ENCODE measurements at regions of chr3 and their contacts with region 1.

Region 1: DNA sequence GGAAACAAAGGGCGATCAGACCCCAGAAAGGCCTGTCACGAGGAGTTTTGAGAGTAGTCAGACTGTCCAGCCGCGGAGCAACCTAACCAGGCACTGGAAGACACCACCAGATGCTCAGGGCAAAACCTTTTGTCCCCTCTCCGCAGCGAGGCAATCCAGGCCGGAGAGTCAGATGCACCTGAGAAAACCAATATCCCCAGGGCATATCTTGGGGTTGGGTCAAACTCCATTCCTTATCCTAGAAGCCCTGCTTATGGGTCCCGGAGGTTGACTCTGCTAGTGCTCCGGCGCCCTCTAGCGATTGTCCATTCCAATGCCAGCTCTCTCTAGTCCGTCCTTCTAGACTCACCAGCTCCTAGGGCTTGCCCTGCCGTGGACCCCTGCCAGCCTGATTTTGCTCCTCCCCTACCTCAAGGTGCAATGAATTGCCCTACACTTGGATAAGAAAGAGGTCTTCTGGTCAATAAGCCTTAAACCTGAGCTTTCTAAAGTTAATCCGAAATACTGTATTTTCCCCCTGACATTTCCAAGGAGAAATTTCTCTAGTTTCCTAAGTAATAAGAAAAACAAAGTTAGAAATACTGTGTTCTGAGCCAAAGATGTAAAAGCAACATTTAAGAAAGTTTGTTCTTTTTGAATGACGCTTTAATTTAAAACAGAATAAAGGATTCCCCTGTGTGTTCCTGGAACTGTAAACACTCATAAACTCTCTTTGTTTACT is 5.5 kb downstream of the CPNE4 start:
- DNase-seq: peak; percentile 81
- H3K4me3 ChIP-seq: no peak overlapping the region; a peak in 1 of 4 replicates
- H3K27ac ChIP-seq: no peak overlapping the region
- H3K4me1 ChIP-seq: peaks cover 0 to 9% of the 10 kb centered on the region in 2 experiments; a peak in 1 of 4 replicates
- H3K27me3 ChIP-seq: no peaks in the 10 kb centered on the region; the same call in 1 of the 2 replicates
- CTCF ChIP-seq: peak; percentile 91
- EP300 ChIP-seq: no peak
- RAD21 ChIP-seq: peak; percentile 92

Region 2: DNA sequence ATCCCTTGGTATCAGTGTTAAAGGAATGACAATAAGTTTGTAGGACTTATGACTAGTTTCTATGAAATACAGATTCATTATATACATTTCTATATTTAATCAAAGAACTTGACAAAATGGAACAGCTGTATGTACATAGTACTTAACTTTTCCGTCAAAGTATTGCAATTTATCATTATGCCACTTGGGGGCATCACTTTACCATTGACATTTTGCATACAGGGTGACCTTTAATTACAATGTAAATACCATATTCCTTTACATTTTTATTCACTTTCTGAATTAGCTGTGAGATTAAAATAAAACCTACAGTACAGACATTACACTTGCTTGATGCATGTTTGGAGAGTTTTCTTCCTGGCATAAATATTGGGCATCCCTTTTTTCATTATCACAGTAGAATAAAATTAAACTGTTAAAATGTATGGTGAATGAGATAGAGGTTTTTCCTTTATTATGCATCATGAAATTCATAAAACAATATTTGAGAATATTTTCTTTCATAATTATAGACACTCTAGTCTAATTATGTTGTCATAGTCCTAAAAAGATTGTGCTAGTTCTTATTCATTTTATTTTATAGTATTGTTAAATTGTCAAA is 995.8 kb before region 1 on chr3:
- CTCF ChIA-PET with region 1: interaction called, 22 read pairs
- POLR2A ChIA-PET with region 1: no interaction called
- DNase-seq: peak; percentile 51
- H3K4me3 ChIP-seq: peak overlapping the region in 1 of 2 experiments; percentile 6; a peak in 1 of 4 replicates
- H3K27ac ChIP-seq: no peak overlapping the region
- H3K4me1 ChIP-seq: no peaks in the 10 kb centered on the region
- H3K27me3 ChIP-seq: no peaks in the 10 kb centered on the region
- CTCF ChIP-seq: peak; percentile 85
- EP300 ChIP-seq: no peak
- RAD21 ChIP-seq: peak; percentile 83

Region 3: GRCh38 chr3:131925571-131925970 is 103.8 kb before region 1 on chr3:
- CTCF ChIA-PET with region 1: no interaction called
- POLR2A ChIA-PET with region 1: no interaction called
- DNase-seq: no peak
- H3K4me3 ChIP-seq: no peak overlapping the region
- H3K27ac ChIP-seq: no peak overlapping the region
- H3K4me1 ChIP-seq: no peaks in the 10 kb centered on the region
- H3K27me3 ChIP-seq: no peaks in the 10 kb centered on the region
- CTCF ChIP-seq: no peak
- EP300 ChIP-seq: no peak
- RAD21 ChIP-seq: no peak

Region 4: DNA sequence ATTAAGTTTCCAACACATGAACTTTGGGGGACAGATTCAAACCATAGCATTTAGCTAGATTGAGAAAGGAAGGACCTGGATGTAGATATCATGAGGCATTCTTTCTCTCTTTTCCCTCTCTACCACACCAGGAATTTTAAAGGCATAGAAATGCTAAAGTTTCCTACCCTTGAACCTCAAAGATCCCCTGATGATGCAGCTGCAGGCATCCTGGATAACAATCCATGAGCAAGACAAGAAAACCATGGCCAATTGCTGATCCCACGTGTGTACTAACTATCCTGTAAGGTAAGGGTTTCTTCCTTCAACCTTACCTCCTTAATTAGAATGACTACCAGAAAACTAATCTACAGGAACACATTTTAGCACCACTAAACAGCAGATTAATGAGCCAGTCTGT is 31.3 kb before region 1 on chr3:
- CTCF ChIA-PET with region 1: interaction called, 11 read pairs
- POLR2A ChIA-PET with region 1: no interaction called
- DNase-seq: no peak
- H3K4me3 ChIP-seq: no peak overlapping the region
- H3K27ac ChIP-seq: no peak overlapping the region
- H3K4me1 ChIP-seq: no peaks in the 10 kb centered on the region; a peak in 1 of 4 replicates
- H3K27me3 ChIP-seq: no peaks in the 10 kb centered on the region
- CTCF ChIP-seq: no peak
- EP300 ChIP-seq: no peak
- RAD21 ChIP-seq: no peak

Region 5: DNA sequence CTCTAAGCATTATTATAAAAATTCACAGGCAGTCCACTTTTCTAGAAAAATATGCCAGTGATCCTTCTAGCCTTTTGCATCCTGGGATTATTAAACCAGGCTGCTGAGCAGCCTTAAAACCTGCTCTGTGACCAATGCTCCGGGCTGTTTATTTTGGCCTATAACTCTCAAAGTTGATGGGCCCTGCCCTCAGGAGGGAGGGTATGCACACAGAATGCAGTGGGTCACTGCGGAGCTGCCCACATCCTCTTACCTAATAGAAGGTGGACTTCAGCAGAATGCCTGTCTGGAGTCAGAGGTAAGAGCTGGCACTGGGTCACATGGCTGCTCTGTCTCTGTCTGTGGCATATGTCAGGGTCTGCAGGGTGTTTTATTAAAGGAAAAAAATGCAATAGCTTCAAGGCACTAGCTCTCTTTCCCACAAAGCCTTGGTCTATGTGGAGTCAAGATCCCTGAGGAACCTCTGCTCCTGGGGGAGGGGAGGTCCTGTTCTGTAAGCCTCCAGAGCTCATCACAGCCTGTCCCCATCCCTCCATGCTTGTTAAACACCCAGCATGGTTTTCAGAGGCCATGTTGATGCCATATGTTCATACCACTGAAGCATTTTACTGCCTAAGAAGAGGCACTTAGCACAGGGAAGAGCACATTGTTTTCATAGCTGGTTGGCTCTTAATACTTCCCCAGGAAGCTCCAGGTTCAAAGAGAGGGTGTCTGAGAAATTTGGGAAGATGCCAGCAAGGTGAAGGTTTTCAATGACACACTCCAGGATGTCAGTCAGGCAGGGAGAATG is 20.3 kb before region 1 on chr3:
- CTCF ChIA-PET with region 1: interaction called, 11 read pairs
- POLR2A ChIA-PET with region 1: no interaction called
- DNase-seq: no peak
- H3K4me3 ChIP-seq: no peak overlapping the region
- H3K27ac ChIP-seq: no peak overlapping the region
- H3K4me1 ChIP-seq: peaks cover 0 to 8% of the 10 kb centered on the region in 2 experiments; a peak in 1 of 4 replicates
- H3K27me3 ChIP-seq: no peaks in the 10 kb centered on the region
- CTCF ChIP-seq: no peak
- EP300 ChIP-seq: no peak
- RAD21 ChIP-seq: no peak

Region 6: DNA sequence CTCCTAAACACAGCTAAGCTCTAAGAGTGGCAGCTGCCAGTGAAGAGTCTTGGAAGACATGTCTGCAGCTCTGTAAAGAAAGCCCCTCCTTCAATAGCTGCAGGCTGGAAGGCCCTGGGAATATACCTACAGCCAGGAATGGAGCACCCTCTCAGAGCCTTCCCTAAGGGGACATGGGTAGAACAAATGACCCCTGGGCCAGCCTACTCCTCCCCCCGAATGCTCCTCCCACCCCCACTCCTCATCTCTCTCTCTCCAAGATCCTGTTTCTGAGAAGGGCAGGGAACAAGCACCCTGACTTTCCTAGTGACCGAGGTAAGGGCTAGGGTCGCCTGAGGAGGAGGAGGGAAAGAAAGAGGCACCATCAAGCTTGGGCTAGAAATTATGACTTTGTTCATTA is 15.2 kb before region 1 on chr3:
- CTCF ChIA-PET with region 1: interaction called, 11 read pairs
- POLR2A ChIA-PET with region 1: no interaction called
- DNase-seq: no peak
- H3K4me3 ChIP-seq: no peak overlapping the region
- H3K27ac ChIP-seq: no peak overlapping the region
- H3K4me1 ChIP-seq: peaks cover 0 to 4% of the 10 kb centered on the region in 2 experiments; a peak in 1 of 4 replicates
- H3K27me3 ChIP-seq: no peaks in the 10 kb centered on the region
- CTCF ChIP-seq: no peak
- EP300 ChIP-seq: no peak
- RAD21 ChIP-seq: no peak